ENCODE measurements at regions of chr19 and their contacts with region 1.

Region 1: DNA sequence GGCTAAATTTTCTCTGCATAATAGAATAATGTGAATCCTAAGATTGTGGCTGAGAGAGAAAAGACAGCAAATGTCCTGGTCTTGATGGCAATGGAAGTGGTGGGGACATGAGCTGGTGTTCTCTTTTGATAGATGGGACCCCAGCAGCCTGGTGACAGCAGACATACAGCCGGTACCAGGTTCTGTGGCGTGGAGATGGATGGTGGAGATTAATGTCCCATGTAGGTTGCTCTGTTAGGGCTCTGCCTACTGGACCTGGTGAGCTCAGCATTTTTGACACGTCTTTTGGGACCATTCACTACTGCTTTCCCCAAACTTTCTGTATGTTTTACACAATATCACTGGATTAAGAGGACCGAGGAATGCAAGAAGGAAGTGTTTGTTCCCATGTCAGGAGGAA is 8.2 kb upstream of the SIGLEC14 start:
- DNase-seq: no peak
- H3K4me3 ChIP-seq: no peak overlapping the region
- H3K4me3 Mint-ChIP-seq: no peak overlapping the region
- H3K27ac Mint-ChIP-seq: no peak overlapping the region
- H3K4me1 ChIP-seq: no peaks in the 10 kb centered on the region
- H3K4me1 Mint-ChIP-seq: no peaks in the 10 kb centered on the region
- H3K27me3 ChIP-seq: no peaks in the 10 kb centered on the region
- H3K27me3 Mint-ChIP-seq: peaks cover 4% of the 10 kb centered on the region
- CTCF ChIP-seq: no peak

Region 2: GRCh38 chr19:51263808-51264207 is 391.0 kb before region 1 on chr19:
- CTCF ChIA-PET with region 1: no interaction called
- POLR2A ChIA-PET with region 1: no interaction called
- intact Hi-C with region 1: no loop called
- DNase-seq: no peak
- H3K4me3 ChIP-seq: no peak overlapping the region
- H3K4me3 Mint-ChIP-seq: no peak overlapping the region
- H3K27ac Mint-ChIP-seq: no peak overlapping the region
- H3K4me1 ChIP-seq: peaks cover 6% of the 10 kb centered on the region; the same call in 1 of the 2 replicates
- H3K4me1 Mint-ChIP-seq: peaks cover 6% of the 10 kb centered on the region
- H3K27me3 ChIP-seq: no peaks in the 10 kb centered on the region; the same call in 1 of the 2 replicates
- H3K27me3 Mint-ChIP-seq: peaks cover 12% of the 10 kb centered on the region
- CTCF ChIP-seq: no peak

Region 3: GRCh38 chr19:51541458-51542357 is 113.1 kb before region 1 on chr19:
- CTCF ChIA-PET with region 1: no interaction called
- POLR2A ChIA-PET with region 1: no interaction called
- intact Hi-C with region 1: no loop called
- DNase-seq: no peak
- H3K4me3 ChIP-seq: no peak overlapping the region
- H3K4me3 Mint-ChIP-seq: no peak overlapping the region
- H3K27ac Mint-ChIP-seq: no peak overlapping the region
- H3K4me1 ChIP-seq: peaks cover 9% of the 10 kb centered on the region; the same call in 1 of the 2 replicates
- H3K4me1 Mint-ChIP-seq: peaks cover 17% of the 10 kb centered on the region
- H3K27me3 ChIP-seq: no peaks in the 10 kb centered on the region
- H3K27me3 Mint-ChIP-seq: no peaks in the 10 kb centered on the region
- CTCF ChIP-seq: no peak

Region 4: DNA sequence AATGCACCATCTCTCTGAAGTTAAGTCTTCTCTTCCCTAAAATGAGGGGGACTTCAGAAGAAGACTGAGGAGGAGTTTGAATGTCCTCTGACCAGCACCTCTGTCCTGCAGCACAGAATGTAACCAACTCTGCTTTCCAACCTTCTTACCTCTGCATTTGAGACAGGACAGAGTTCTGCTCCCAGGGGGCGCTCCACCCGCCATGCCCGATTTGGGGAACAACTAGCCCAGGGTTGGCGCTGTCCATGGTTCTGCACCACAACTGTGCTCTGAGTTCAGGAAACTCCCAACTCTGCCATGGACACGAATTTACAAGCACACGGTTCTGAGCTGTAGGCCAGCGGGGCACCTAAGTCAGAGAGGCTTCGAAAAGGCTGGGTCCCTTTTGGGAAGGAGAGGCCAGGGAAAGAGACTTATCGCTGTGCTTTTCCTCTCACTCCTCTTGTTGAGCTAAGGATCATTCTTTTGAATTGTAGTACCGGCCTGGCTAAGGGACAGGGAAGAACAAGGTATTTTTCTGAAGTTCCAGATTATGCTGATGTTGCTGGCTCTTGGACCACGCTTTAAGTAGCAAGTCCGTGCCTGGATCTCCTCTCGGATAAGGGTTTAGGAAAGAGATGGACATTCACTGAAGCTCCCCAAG is 46.7 kb before region 1 on chr19:
- CTCF ChIA-PET with region 1: interaction called, 11 read pairs
- POLR2A ChIA-PET with region 1: no interaction called
- intact Hi-C with region 1: loop called (anchors 5 kb)
- DNase-seq: peak; percentile 84
- H3K4me3 ChIP-seq: no peak overlapping the region
- H3K4me3 Mint-ChIP-seq: no peak overlapping the region
- H3K27ac Mint-ChIP-seq: no peak overlapping the region
- H3K4me1 ChIP-seq: no peaks in the 10 kb centered on the region
- H3K4me1 Mint-ChIP-seq: no peaks in the 10 kb centered on the region
- H3K27me3 ChIP-seq: no peaks in the 10 kb centered on the region
- H3K27me3 Mint-ChIP-seq: peaks cover 15% of the 10 kb centered on the region
- CTCF ChIP-seq: peak; percentile 75 to 78

Measured in Caco-2 (cell line).